Panc1 (cell line): ENCODE measurements at regions of chr6 and their contacts with region 1.

Region 1: DNA sequence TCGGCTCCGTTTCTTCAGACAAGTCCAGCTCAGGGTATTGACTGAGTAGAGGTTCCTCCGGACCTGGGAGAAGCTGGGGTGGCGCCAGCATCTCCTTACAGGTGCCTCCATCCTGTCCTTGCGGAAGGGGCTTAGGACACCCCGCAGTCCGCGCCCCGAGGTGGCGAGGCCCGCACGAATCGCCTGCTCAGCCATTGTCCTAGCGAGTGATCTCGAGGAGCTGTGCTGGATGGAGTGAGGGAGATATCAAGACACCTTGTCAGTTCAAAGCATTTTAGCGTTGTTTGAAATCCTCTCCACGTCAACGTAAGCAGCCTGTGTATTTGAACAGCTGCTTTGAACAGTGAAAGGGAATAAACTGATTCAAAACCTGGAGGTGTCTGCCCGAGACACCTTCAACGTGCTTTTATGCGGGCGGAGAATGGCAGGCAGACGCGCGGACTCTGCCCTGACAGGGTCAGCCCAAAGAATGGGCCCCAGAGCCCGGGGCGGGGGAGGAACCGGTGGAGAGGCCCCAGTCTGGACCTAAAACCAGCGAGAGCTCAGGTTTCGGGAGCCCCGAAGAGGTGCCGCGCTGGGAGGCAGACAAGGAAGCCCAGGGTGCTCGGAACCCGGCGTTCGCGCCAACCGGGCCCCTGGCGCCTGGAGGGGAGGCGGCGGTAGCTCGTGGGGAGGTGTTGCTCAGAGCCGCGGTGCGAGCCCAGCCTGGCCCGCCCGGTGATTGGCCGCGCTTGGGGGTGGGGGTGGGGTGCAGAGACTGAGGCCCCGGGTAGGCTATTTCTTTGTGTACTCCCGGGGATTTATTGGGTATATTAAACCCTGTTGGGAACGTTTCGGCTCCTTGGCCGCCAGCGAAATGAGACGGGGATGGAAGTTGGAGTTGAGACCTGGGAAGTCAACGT is 3.1 kb upstream of the POU3F2 start:
- DNase-seq: no peak
- ATAC-seq: no peak
- H3K4me3 ChIP-seq: no peak overlapping the region
- H3K27ac ChIP-seq: no peak overlapping the region
- H3K4me1 ChIP-seq: peaks cover 9% of the 10 kb centered on the region
- H3K27me3 ChIP-seq: peaks cover 50% of the 10 kb centered on the region
- CTCF ChIP-seq: no peak

Region 2: DNA sequence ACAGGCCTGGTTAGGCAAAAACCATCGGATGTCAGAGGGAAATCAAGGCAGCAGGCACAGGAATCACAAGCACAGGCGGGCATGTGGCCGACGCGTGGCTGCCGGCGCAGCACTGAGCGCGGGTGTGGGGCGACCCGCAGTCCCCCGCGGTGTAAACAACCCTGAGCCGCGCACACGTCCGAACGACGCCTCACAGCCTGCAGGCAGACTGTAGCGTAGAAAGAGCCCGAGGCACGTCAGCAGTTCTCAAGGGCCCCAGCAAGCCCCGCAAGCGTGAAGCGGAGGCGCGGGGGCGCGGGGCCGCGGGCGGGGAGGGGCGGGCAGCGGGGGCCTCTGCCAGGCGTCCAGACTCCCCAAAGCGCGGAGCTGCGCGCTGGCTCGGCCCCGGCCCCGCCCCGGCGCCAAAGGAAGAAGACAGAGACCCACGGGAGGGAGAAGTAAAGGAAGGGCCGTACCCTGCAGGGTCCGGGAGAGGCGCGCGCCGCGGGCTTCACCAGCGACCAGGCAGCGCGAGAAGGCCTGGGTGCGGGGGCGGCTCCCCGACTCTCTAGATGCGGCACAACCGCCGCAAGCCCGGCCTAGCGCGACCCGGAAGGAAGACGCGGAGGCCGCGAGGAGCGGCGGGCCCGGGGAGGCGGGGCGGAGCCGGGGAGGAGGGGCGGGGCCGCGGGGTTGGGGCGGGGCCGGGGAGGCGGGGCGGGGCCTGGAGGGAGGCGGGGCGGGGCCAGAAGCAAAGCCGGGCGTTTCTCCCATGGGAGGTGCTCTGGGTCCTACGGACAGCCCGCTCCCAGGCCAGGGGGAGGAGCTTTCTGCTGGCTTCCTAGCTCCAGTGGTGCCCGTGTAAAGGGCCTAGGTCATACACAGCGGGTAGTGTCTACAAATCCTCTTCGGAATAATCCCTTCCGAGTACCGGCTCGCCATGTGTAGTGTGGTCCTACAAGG is 116.3 kb after region 1 on chr6 and contains the start of gene FBXL4:
- CTCF ChIA-PET with region 1: interaction called, 10 read pairs
- POLR2A ChIA-PET with region 1: no interaction called
- in situ Hi-C with region 1: no loop called
- intact Hi-C with region 1: no loop called
- DNase-seq: no peak
- ATAC-seq: peak; percentile 98
- H3K4me3 ChIP-seq: peak within 1 kb of the TSS; percentile 69 to 85
- H3K27ac ChIP-seq: peak within 1 kb of the TSS; percentile 86
- H3K4me1 ChIP-seq: peaks cover 19% of the 10 kb centered on the region
- H3K27me3 ChIP-seq: no peaks in the 10 kb centered on the region
- CTCF ChIP-seq: no peak
- total RNA-seq, gene FBXL4: 11.5 TPM